ENCODE measurements at regions of chr11 and their contacts with region 1.

Region 1: GRCh38 chr11:30143098-30143705 is 87.6 kb upstream of the FSHB start:
- DNase-seq: peak; percentile 13
- CTCF ChIP-seq: peak; percentile 72

Region 2: GRCh38 chr11:30113326-30113873 is 29.8 kb before region 1 on chr11:
- CTCF ChIA-PET with region 1: interaction called, 14 read pairs
- POLR2A ChIA-PET with region 1: no interaction called
- DNase-seq: no peak
- CTCF ChIP-seq: no peak

Region 3: GRCh38 chr11:30155428-30155827 is 12.2 kb after region 1 on chr11:
- CTCF ChIA-PET with region 1: interaction called, 55 read pairs
- POLR2A ChIA-PET with region 1: no interaction called
- DNase-seq: no peak
- CTCF ChIP-seq: no peak

Region 4: DNA sequence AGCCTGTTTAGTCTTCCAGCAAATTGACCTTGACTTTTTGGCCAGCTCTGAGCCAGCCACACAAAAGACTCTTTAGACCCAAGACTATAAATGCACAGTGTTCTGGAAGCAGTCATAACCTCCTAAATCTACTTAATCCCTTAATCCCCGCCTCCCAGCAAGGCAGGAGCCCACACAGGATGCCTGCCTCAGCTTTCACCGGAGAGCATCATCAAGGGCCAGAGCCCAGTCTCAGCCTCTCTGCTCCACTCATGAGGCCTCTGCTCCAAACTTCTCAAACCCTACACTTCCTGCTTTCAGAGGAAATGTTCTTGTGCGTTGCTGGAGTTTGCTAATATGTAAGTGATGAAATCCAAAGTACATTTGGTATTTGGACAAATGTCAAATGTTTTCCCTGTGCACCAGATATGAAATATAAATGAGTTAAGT is 29.7 kb after region 1 on chr11:
- CTCF ChIA-PET with region 1: interaction called, 17 read pairs
- POLR2A ChIA-PET with region 1: no interaction called
- DNase-seq: no peak
- CTCF ChIP-seq: no peak

Region 5: DNA sequence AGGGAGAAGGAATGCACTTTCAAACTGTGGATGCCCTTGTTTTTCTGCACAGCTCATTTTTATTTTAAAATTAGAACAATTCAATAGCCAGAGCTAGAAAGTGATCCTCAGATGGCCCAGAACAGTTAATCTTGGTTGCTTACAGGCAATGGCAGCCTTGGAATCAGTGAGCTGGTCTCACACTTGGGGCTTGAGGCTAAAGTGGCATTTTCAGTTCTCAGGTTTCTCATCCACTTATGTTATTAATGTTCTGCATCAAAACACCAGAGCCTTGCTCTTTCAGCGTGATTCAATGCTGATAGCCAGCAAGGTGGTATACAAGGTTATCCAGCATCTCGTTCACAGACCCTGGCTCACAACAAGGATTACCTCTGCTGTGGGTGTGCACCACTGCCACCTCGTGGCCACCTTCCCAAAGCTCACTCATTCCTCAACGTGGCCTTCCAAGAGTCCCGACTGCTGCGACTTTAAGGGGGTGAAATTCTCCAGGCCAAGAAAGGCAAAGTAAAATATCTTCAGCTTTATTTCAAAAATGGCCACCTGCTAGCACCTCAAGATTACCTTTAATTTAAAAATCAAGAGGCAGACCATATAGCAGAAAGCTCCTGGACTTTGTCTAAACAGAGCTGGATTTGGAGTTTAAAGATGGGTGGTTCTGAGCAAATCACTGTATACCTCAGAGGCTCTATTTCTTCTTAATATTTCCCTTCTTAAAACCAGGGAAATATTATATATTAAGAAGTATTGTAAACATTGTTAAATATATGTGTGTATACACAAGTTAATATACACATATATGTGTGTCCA is 53.4 kb after region 1 on chr11:
- CTCF ChIA-PET with region 1: interaction called, 27 read pairs
- POLR2A ChIA-PET with region 1: no interaction called
- DNase-seq: peak; percentile 27
- CTCF ChIP-seq: peak; percentile 80

Region 6: GRCh38 chr11:30322826-30323710 is 179.9 kb after region 1 on chr11 and contains the start of gene ARL14EP:
- CTCF ChIA-PET with region 1: interaction called, 16 read pairs
- POLR2A ChIA-PET with region 1: no interaction called
- DNase-seq: peak; percentile 88
- CTCF ChIP-seq: no peak

Measured in GM10248 (cell line).